OCI-LY7 (cell line): ENCODE measurements at regions of chr7 and their contacts with region 1.

Region 1: DNA sequence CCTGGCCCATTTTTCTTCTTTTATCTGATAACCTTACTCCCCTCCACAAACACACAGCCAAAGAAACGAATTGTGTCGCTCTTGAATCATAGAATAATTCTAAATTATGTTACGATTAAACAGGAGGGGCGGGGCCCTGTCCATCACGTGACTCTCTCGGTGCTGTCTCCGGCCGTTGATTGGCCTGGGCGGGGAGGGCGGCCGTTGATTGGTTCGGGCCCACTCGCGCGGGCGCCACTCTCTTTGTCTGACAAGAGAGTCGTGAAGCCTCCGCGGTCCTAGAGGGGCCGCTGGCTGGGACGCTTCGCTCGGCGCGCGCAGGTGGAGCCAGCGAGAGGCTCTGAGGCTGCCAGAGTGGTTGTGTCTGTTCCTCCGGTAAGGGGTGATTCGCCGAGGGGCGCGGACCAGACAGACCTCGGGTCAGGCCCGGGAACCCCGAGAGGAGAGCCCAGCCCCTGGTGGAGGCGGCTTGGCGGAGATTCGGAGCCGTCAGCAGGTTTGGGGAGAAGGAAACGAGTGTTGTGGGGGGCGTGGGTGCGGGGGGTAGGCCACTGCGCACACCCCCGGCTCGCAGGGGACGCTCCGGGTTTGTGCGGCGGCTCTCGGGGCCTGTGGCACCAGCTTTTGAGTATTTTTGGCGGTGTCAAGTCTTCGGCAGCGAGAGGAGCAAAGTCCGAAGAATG is at the start of gene ZNF789:
- DNase-seq: peak; percentile 98
- H3K4me3 ChIP-seq: peak within 1 kb of the TSS; percentile 85
- H3K27ac ChIP-seq: peak within 1 kb of the TSS; percentile 93
- H3K4me1 ChIP-seq: peaks cover 12% of the 10 kb centered on the region
- CTCF ChIP-seq: no peak
- total RNA-seq, gene ZNF789: 23.2 and 32.2 TPM in 2 replicates

Region 2: DNA sequence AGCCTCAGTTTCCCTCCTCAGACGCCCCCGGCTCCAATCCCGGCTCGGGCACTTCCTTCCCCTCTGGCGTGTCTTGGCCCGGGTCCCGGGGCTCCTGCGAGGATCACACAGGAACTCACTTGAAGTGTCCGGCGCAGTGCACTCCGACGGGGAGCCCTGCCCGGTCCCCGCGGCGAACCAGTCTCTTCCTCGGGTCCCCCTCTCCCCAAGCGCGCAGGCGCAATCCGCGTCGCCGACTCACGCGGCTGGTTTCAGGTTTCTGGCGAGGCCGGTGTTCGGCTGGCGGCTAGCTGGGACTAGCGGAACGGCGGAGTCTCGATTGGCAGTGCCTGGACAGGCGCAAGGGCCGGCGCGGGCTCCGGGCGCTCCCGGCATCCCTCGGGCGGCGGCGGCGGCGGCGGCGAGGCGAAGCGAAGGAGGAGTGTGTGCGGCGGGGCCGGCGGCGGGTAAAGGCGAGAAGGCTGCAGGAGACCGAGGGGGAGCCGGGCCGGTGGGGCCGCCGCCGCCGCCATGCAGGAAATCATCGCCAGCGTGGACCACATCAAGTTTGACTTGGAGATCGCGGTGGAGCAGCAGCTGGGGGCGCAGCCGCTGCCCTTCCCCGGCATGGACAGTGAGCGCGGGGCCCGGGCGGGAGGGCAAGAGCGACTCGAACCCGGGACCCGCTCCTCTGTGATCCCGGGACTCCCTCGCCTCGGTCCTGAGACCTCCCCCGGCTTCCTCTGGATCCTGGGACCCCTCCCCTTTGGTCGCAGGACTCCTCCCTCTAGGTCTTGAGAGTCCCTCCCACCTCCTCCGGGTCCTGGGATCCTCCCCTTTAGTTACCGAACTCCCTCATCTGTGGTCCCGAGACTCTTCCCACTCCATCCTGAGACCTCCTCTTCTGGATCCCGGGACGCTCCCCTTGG is 33.9 kb before region 1 on chr7 and contains the starts of genes CPSF4 and PTCD1:
- CTCF ChIA-PET with region 1: no interaction called
- POLR2A ChIA-PET with region 1: interaction called, 5 read pairs
- intact Hi-C with region 1: loop called (anchors 2 kb)
- DNase-seq: peak; percentile 95
- H3K4me3 ChIP-seq: peak within 1 kb of the TSS; percentile 86
- H3K27ac ChIP-seq: peak within 1 kb of the TSS; percentile 46
- H3K4me1 ChIP-seq: peaks cover 18% of the 10 kb centered on the region
- CTCF ChIP-seq: no peak
- total RNA-seq, gene CPSF4: 75.3 and 84.4 TPM in 2 replicates
- total RNA-seq, gene PTCD1: 11.0 and 11.1 TPM in 2 replicates

Region 3: GRCh38 chr7:99459087-99459486 is 13.6 kb before region 1 on chr7:
- CTCF ChIA-PET with region 1: no interaction called
- POLR2A ChIA-PET with region 1: no interaction called
- intact Hi-C with region 1: no loop called
- DNase-seq: peak; percentile 40
- H3K4me3 ChIP-seq: no peak overlapping the region
- H3K27ac ChIP-seq: no peak overlapping the region
- H3K4me1 ChIP-seq: peaks cover 8% of the 10 kb centered on the region
- CTCF ChIP-seq: peak; percentile 67

Region 4: DNA sequence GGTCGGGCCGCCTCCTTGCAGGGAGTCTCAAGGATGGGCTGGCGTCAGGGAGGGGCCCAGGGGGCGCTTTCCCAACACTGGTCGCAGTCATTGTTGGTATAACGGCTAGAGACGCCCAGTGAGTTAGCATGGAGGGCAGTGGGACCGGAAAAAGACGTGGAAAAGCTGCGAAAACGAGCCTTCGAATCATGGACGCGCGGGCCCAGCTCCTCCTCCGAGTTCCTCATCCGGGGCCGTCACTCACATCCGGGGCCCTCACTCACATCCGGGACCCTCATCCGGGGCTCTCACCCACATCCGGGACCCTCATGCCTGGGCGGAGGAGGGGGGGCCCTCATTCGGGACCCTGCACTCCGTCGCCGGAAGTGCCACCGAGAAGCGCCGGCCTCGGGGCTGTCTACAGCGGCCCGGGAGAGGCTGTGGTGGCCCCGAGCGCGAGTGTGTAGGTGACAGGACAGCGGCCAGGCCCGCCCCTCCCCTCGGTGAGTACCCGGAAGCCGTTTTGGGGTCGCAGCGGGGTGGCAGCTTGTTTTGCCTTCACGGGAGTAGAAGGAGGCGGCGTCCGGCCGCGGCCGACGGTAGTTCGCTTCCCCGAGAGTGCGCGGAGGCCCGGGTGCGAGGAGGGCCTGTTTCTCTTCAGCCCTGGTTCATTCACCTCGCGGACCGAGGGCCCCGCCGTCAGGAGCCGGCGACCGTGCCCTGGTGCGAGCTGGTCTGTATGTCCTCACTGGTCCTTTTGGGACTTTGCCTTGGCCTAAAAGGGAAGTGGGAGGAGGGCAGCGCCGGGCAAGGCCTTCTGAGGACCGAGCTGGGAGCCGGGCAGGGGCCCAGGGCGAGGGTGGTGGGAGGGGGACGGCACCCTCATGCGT is 85.8 kb after region 1 on chr7 and contains the start of gene ZNF655:
- CTCF ChIA-PET with region 1: no interaction called
- POLR2A ChIA-PET with region 1: interaction called, 4 read pairs
- intact Hi-C with region 1: loop called (anchors 1 kb)
- DNase-seq: peak; percentile 94
- H3K4me3 ChIP-seq: peak within 1 kb of the TSS; percentile 97
- H3K27ac ChIP-seq: peak within 1 kb of the TSS; percentile 79
- H3K4me1 ChIP-seq: peaks cover 23% of the 10 kb centered on the region
- CTCF ChIP-seq: no peak
- total RNA-seq, gene ZNF655: 64.1 and 100 TPM in 2 replicates